ENCODE measurements at regions of chr5 and their contacts with region 1.

Region 1: DNA sequence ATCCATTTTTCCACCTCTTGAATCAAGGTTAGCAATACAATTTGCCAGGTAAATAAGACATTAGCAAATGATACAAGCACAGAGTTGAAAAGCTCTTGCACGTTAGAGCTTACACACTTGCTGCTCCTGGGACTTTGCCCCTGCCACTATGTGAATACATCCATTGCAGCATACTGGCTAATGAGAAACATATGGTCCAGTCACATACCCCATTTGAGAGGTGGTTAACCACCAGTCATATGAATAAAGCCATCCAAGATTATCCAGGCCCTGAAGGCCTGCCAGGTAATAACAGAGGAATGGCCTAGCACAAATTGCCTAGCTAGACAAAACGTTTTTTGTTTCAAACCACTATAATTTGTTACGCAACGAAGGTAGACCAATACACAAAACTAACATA is 45.8 kb upstream of the FTMT start:
- DNase-seq: no peak
- ATAC-seq: no peak
- H3K4me3 Mint-ChIP-seq: no peak overlapping the region
- H3K27ac Mint-ChIP-seq: no peak overlapping the region
- H3K4me1 Mint-ChIP-seq: no peaks in the 10 kb centered on the region
- H3K27me3 Mint-ChIP-seq: no peaks in the 10 kb centered on the region
- CTCF ChIP-seq: no peak

Region 2: GRCh38 chr5:121795511-121795910 is 10.4 kb before region 1 on chr5:
- CTCF ChIA-PET with region 1: no interaction called
- POLR2A ChIA-PET with region 1: no interaction called
- intact Hi-C with region 1: loop called (anchors 1 kb)
- DNase-seq: no peak
- ATAC-seq: no peak
- H3K4me3 Mint-ChIP-seq: no peak overlapping the region
- H3K27ac Mint-ChIP-seq: no peak overlapping the region
- H3K4me1 Mint-ChIP-seq: no peaks in the 10 kb centered on the region
- H3K27me3 Mint-ChIP-seq: no peaks in the 10 kb centered on the region
- CTCF ChIP-seq: no peak

Region 3: DNA sequence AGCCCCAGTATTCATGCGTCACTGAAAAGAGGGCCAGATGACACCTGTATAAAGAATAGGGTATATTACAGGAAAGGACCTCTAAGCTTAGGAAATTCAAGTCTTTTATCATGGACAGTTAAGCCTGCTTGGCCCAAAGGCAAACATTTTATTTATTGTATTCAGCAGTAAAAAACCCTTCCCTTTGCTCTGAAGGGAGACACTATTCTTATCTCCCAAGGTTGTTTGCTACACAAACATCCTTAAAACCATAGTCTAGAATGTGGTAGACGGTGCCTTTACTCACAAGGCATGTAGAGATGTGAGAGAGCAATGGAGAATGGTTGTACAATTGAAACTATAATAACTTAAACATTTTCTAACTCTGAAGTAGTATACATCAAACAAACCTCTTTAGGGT is 79.7 kb after region 1 on chr5:
- CTCF ChIA-PET with region 1: no interaction called
- POLR2A ChIA-PET with region 1: no interaction called
- intact Hi-C with region 1: no loop called
- DNase-seq: no peak
- ATAC-seq: no peak
- H3K4me3 Mint-ChIP-seq: no peak overlapping the region
- H3K27ac Mint-ChIP-seq: no peak overlapping the region
- H3K4me1 Mint-ChIP-seq: no peaks in the 10 kb centered on the region
- H3K27me3 Mint-ChIP-seq: no peaks in the 10 kb centered on the region
- CTCF ChIP-seq: no peak